PC-9 (cell line): ENCODE measurements at regions of chr12 and their contacts with region 1.

Region 1: GRCh38 chr12:23204933-23205778 is 580.2 kb downstream of the ETNK1 start:
- DNase-seq: peak in 1 of 2 experiments; percentile 47
- H3K4me3 ChIP-seq: no peak overlapping the region
- H3K27ac ChIP-seq: no peak overlapping the region
- H3K4me1 ChIP-seq: no peaks in the 10 kb centered on the region
- H3K27me3 ChIP-seq: no peaks in the 10 kb centered on the region
- CTCF ChIP-seq: peak; percentile 95

Region 2: DNA sequence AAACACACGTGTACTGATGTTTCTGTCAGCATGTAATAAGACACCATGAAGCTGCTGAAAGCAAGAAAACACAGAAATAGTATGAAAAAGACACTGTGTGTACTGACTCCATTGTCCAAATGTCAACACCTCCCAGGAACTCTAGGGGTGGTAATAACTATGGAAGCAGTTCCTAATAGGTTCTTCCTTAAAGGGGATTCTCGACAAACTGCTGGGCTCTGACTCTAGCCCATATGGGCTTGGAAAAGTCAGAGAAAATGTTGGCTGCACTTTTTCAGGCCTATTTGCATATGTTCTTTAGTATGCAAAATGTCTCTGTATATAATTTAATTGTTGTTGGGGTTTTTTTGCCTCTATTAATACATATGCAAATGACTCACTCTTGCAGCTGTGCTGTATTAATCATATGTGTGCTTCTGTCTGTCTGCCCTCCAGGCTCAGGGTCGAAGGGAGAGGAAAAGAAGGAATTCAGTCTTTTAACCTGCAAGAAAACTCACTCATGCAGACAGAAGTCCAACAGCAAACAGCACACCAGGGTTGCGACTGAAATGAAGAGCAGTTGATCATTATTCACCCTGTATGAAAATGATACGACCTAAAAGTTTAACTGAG is 426.7 kb after region 1 on chr12:
- CTCF ChIA-PET with region 1: no interaction called
- POLR2A ChIA-PET with region 1: no interaction called
- intact Hi-C with region 1: no loop called
- DNase-seq: no peak
- H3K4me3 ChIP-seq: no peak overlapping the region
- H3K27ac ChIP-seq: no peak overlapping the region
- H3K4me1 ChIP-seq: no peaks in the 10 kb centered on the region
- H3K27me3 ChIP-seq: peaks cover 6% of the 10 kb centered on the region; the same call in 1 of the 2 replicates
- CTCF ChIP-seq: no peak

Region 3: GRCh38 chr12:24778486-24779304 is 1573.5 kb after region 1 on chr12:
- CTCF ChIA-PET with region 1: no interaction called
- POLR2A ChIA-PET with region 1: no interaction called
- intact Hi-C with region 1: loop called (anchors 5 kb)
- DNase-seq: no peak
- H3K4me3 ChIP-seq: no peak overlapping the region
- H3K27ac ChIP-seq: no peak overlapping the region
- H3K4me1 ChIP-seq: no peaks in the 10 kb centered on the region
- H3K27me3 ChIP-seq: no peaks in the 10 kb centered on the region
- CTCF ChIP-seq: peak; percentile 56

Region 4: DNA sequence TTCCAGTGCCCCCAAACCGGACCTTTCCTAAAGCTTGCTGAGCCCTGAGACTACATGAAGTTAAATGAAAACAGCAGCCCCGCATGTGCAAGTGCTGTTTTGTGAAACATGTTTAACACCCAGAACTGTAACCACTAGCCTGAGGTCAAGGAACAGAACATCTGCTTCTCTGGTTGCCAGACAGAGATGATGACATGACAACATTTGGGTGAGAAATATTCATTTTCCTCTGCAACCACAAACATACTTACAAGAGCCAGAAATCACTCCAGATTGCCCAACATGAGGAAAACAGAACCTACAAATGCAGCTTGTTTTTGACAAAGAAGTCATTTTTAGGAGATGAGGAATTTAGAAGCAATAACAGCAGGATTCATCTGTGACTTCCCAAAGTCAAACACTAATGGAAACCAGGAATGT is 1633.4 kb after region 1 on chr12:
- CTCF ChIA-PET with region 1: no interaction called
- POLR2A ChIA-PET with region 1: no interaction called
- intact Hi-C with region 1: loop called (anchors 2 kb)
- DNase-seq: no peak
- H3K4me3 ChIP-seq: no peak overlapping the region
- H3K27ac ChIP-seq: no peak overlapping the region
- H3K4me1 ChIP-seq: no peaks in the 10 kb centered on the region
- H3K27me3 ChIP-seq: no peaks in the 10 kb centered on the region
- CTCF ChIP-seq: no peak